BJ (cell line): ENCODE measurements at regions of chr15 and their contacts with region 1.

Region 1: DNA sequence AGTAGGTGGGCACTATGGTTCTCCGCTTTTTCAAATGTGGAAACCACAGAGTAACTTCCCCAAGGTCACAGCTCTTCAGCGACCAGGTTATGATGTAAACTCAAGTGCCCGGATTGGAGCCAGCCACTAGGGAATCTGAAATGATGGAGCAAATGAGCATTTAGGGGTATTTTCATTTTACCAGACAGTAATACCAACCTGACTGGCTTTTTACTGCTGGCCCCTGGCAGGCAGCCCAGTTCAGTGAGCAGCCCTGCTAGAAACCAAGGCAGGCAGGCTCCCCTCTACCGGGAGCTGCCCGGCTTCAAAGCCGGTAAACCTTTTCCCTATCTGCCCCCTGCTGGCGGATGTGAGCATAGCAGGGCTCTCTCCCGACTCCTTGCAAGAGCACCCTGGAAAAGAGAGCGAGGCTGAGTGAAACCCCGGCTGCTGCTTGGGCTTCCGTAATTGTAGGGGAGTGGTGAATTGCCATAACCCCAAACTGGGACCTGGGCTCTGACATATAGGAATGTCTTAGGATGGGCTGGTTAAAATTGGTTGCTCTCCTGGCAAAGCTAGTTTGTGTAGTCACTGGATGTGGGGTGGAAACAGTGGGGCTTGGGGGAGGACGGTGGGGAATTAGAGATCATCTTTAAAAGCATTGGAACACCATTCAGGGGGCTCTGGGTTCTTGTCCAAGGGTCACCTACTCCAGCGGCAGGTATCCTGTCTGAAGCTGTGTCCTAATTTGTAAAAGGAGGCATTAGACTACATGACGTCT is 98.0 kb upstream of the TNFAIP8L3 start:
- DNase-seq: no peak
- H3K4me3 ChIP-seq: no peak overlapping the region
- H3K27me3 ChIP-seq: peaks cover 7% of the 10 kb centered on the region
- CTCF ChIP-seq: peak; percentile 97

Region 2: DNA sequence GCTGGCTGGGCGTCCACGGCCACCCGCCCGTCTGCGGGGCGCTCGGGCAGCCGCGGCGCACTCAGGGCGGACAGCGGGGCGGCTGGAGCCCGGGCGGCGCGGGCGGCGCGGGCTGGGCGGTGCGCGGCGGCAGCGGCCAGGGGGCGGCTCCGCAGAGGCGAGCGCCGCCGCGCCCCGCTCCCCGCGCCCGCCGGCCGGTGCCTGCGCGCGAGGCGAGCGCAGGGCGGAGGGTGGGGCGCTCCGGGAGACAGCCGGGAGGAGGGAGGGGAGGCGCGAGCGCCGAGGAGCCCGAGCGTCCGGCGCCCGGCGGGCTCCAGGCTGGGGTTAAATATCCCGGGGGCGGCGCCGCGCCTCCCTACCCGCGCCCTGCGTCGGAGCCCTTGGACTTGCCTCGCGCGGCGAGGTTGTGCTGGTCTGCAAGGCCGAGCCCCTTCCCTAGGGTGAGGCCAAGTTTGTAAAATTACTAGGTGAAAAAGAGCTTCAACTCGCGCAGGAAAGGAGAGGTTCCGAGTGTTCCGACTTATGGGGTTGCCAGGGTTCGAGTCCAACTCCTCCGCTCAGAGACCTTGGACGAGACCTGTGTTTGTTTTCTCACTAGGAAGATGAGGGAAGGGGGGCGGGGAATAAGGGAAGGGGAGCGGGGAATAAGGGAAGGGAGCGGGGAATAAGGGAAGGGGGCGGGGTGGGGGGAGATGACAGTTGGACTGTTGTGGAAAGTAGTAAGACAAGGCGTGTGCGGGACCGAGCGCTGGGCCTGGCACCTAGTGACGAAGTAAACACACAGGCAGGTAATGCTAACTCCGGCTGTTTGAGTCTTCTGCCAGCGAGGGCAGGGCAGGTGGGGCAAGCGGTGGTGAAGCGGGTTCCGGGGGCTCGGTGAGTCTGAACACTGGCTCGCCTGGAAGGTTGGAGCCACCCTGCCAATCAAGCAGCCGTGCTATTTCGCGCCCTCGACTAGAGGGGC is 97.8 kb before region 1 on chr15 and contains the start of gene TNFAIP8L3:
- CTCF ChIA-PET with region 1: no interaction called
- POLR2A ChIA-PET with region 1: no interaction called
- DNase-seq: no peak
- H3K4me3 ChIP-seq: peak within 1 kb of the TSS; percentile 44
- H3K27me3 ChIP-seq: peaks cover 38% of the 10 kb centered on the region
- CTCF ChIP-seq: no peak
- polyA plus RNA-seq, gene TNFAIP8L3: 0.04 and 0.07 TPM in 2 replicates

Region 3: GRCh38 chr15:51144021-51144532 is 48.6 kb before region 1 on chr15:
- CTCF ChIA-PET with region 1: interaction called, 12 read pairs
- POLR2A ChIA-PET with region 1: no interaction called
- DNase-seq: peak; percentile 10
- H3K4me3 ChIP-seq: no peak overlapping the region
- H3K27me3 ChIP-seq: no peaks in the 10 kb centered on the region; the same call in 1 of the 2 replicates
- CTCF ChIP-seq: no peak

Region 4: DNA sequence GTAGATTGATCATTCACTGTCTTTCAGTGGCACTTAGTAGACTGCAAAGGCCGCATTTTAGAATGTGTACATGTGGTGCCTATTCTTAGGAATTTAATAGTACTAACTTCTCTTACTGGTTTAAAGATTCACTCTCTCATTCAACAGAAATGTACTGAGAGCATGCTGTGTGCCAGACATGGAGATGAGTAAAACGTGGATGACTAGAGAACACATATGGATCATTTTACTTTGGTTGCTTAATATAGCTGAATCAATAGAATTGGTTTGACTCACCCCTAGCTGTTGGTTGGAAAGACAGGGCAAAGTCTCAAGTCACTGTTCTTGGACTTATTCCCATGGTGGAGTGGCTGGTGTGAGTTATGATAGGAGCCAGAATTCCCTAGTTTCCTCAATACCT is 11.1 kb after region 1 on chr15:
- CTCF ChIA-PET with region 1: interaction called, 54 read pairs
- POLR2A ChIA-PET with region 1: no interaction called
- DNase-seq: peak; percentile 68
- H3K4me3 ChIP-seq: no peak overlapping the region
- H3K27me3 ChIP-seq: peaks cover 2% of the 10 kb centered on the region; the same call in 1 of the 2 replicates
- CTCF ChIP-seq: no peak

Region 5: GRCh38 chr15:51227940-51228783 is 35.5 kb after region 1 on chr15:
- CTCF ChIA-PET with region 1: interaction called, 15 read pairs
- POLR2A ChIA-PET with region 1: no interaction called
- DNase-seq: peak; percentile 67
- H3K4me3 ChIP-seq: no peak overlapping the region
- H3K27me3 ChIP-seq: no peaks in the 10 kb centered on the region
- CTCF ChIP-seq: no peak